Activated CD4-positive, alpha-beta T cell treated with anti-CD3 and anti-CD28 coated beads, Interleukin-2, amount 10 ng/mL, durations not matched to agents 7 days and 5 days (primary cell): ENCODE measurements at regions of chr1 and their contacts with region 1.

Region 1: DNA sequence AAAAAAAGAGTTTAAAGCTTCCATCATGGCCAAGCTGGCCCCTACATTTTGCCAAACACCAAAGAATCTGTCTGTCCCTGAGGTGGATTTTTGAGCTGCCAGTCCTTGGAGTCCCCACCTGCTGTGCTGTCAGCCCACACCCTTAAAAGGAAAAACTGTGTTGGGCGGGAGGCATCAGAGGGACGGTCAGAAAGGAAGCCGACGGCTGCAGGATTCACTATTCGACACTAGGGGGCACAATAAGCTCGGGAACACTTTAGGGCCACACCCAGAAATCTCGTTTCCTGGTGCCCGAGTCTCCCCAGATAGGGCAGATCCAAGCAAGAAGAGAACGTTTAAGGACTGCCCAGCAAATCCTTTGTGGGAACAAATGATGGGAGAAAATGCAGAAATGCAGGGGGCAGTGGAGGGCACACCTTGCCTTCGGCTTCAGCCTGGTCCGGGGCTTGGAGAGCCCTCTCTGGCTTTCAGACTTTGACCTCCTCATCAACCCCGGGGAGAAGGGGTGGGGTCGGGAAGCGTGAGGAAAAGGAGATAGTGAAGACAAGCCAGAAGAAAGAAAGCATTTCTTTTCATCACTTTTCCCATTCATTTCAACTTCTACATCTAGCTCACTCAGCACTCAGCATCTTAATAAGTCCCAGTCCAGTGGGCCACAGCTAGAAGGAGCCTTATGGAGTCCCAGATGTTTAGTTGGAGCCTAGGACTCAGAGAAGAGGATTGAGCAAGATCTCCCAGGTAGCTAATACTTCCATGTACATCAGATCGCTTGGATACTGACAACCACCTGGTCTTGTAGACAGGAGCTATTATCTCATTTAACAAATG is 5.0 kb upstream of the CTTNBP2NL start:
- DNase-seq: peak; percentile 84
- H3K4me3 Mint-ChIP-seq: peak overlapping the region; percentile 47
- H3K27ac Mint-ChIP-seq: peak overlapping the region; percentile 55
- H3K4me1 Mint-ChIP-seq: peaks cover 31% of the 10 kb centered on the region
- H3K27me3 Mint-ChIP-seq: peaks cover 8% of the 10 kb centered on the region

Region 2: GRCh38 chr1:112144733-112145426 is 246.1 kb before region 1 on chr1:
- CTCF ChIA-PET with region 1: no interaction called
- POLR2A ChIA-PET with region 1: no interaction called
- DNase-seq: no peak
- H3K4me3 Mint-ChIP-seq: no peak overlapping the region
- H3K27ac Mint-ChIP-seq: no peak overlapping the region
- H3K4me1 Mint-ChIP-seq: no peaks in the 10 kb centered on the region
- H3K27me3 Mint-ChIP-seq: no peaks in the 10 kb centered on the region

Region 3: DNA sequence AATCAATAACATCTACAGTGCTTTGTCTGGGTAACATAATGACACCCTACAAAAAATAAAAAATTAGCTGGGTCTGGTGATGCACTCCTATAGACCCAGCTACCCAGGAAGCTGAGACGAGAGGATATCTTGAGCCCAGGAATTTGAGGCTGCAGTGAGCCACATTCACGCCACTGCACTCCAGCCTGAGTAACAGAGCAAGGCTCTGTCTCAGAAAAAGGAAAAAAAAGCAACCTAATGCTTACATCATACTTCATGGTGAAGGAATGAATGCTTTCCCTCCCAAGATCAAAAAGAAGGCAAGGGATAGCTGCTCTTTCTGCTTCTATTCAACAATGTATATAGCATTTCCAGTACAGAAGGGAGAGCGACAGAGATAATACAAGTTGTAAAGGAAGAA is 19.2 kb before region 1 on chr1:
- CTCF ChIA-PET with region 1: no interaction called
- POLR2A ChIA-PET with region 1: no interaction called
- DNase-seq: no peak
- H3K4me3 Mint-ChIP-seq: no peak overlapping the region
- H3K27ac Mint-ChIP-seq: no peak overlapping the region
- H3K4me1 Mint-ChIP-seq: peaks cover 2% of the 10 kb centered on the region
- H3K27me3 Mint-ChIP-seq: peaks cover 64% of the 10 kb centered on the region

Region 4: GRCh38 chr1:112466078-112466660 is 75.2 kb after region 1 on chr1:
- CTCF ChIA-PET with region 1: interaction called, 34 read pairs
- POLR2A ChIA-PET with region 1: no interaction called
- DNase-seq: peak; percentile 89
- H3K4me3 Mint-ChIP-seq: peak overlapping the region; percentile 70
- H3K27ac Mint-ChIP-seq: peak overlapping the region; percentile 71
- H3K4me1 Mint-ChIP-seq: peaks cover 16% of the 10 kb centered on the region
- H3K27me3 Mint-ChIP-seq: peaks cover 20% of the 10 kb centered on the region

Region 5: GRCh38 chr1:112706908-112707663 is 316.1 kb after region 1 on chr1 and contains the start of gene RHOC:
- CTCF ChIA-PET with region 1: interaction called, 13 read pairs
- POLR2A ChIA-PET with region 1: no interaction called
- DNase-seq: peak; percentile 65
- H3K4me3 Mint-ChIP-seq: peak within 1 kb of the TSS; percentile 77
- H3K27ac Mint-ChIP-seq: peak within 1 kb of the TSS; percentile 87
- H3K4me1 Mint-ChIP-seq: peaks cover 45% of the 10 kb centered on the region
- H3K27me3 Mint-ChIP-seq: peaks cover 34% of the 10 kb centered on the region
- total RNA-seq, gene RHOC: 53.7 to 56.8 TPM